ENCODE measurements at regions of chr7 and their contacts with region 1.

Region 1: DNA sequence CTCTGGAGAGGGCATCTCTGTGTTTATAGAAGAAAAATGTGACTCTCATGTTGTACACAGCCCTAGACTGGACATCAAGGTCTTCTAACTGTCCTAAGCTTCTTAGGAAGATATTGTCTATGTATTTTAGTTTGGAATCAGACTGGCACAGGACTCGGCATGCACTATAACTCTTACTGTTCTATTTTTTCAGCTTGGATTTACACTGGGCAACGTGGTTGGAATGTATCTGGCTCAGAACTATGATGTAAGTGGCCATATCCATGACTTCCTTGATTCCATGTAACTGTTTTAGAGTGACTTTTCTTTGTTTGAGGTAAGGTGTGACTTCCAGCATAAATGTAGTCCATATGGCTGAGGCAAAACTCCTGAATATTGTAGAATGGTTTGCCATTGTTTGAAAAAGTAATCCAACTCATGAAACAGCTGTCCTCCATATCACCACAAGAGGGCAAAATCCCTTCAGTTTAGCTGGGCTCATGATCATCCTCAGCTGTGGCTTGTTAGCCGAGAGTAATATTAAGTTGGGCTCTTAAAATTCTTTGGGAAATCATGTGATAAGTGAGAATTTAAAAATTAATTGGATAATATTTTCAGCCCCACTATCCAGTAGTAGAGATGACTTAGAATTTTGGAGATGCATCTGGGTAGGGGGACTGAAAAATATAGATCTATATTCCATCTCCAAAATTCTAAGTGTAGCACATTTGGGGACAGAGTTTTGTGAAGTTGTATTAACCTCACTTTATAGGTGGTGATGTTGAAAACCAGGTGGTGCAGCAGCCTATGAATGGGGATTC is 10.4 kb downstream of the STMP1 start:
- DNase-seq: peak in 1 of 2 donors; percentile 53
- ATAC-seq: peak; percentile 59 to 88 (median 82)
- H3K4me3 ChIP-seq: no peak overlapping the region
- H3K27ac ChIP-seq: peak overlapping the region in 6 of 10 donors; percentile 31 to 63 (median 38)
- H3K4me1 ChIP-seq: peaks cover 2 to 64% (median 44%) of the 10 kb centered on the region in 9 donors
- H3K27me3 ChIP-seq: no peaks in the 10 kb centered on the region
- CTCF ChIP-seq: peak; percentile 62 to 86 (median 78)

Region 2: DNA sequence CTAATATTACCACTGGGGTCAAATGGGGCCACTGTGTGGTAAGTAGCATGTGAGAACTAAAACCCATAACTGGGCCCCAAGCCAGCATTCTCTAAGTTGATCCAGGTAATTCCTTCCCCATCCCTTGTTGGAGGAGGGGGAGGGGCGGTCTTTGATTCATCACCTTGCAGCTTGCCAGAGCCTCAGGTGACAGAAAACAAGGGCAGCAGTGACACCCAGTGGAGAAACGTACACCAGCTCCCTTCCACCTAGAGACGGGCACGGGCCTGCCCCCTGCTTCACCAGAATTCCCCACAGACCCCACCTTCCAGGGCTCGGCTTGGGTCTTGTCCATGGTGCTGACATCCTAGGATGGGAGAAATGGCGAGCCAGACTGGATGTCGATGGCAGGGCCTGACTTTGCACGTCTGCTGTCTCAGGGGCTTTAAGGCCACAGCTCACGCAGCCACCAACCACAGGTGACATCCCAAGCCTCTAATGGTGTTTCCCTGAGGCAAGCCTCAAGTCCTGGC is 337.1 kb before region 1 on chr7:
- intact Hi-C with region 1: no loop called
- DNase-seq: peak in 1 of 2 donors; percentile 32
- ATAC-seq: peak in 7 of 8 donors; percentile 42 to 85 (median 67)
- H3K4me3 ChIP-seq: no peak overlapping the region
- H3K27ac ChIP-seq: no peak overlapping the region
- H3K4me1 ChIP-seq: no peaks in the 10 kb centered on the region
- H3K27me3 ChIP-seq: no peaks in the 10 kb centered on the region
- CTCF ChIP-seq: peak in 8 of 9 donors; percentile 10 to 51 (median 42)

Region 3: GRCh38 chr7:135745703-135746312 is 73.0 kb after region 1 on chr7:
- intact Hi-C with region 1: loop called in 2 of 10 experiments (anchors 5 to 10 kb)
- DNase-seq: peak in 1 of 2 donors; percentile 76
- ATAC-seq: peak in 7 of 8 donors; percentile 33 to 77 (median 57)
- H3K4me3 ChIP-seq: peak overlapping the region in 3 of 10 donors; percentile 2 to 52 (median 43)
- H3K27ac ChIP-seq: peak overlapping the region in 6 of 10 donors; percentile 62 to 91 (median 76)
- H3K4me1 ChIP-seq: peaks cover 7 to 62% (median 20%) of the 10 kb centered on the region in 9 donors
- H3K27me3 ChIP-seq: no peaks in the 10 kb centered on the region
- CTCF ChIP-seq: no peak

Region 4: DNA sequence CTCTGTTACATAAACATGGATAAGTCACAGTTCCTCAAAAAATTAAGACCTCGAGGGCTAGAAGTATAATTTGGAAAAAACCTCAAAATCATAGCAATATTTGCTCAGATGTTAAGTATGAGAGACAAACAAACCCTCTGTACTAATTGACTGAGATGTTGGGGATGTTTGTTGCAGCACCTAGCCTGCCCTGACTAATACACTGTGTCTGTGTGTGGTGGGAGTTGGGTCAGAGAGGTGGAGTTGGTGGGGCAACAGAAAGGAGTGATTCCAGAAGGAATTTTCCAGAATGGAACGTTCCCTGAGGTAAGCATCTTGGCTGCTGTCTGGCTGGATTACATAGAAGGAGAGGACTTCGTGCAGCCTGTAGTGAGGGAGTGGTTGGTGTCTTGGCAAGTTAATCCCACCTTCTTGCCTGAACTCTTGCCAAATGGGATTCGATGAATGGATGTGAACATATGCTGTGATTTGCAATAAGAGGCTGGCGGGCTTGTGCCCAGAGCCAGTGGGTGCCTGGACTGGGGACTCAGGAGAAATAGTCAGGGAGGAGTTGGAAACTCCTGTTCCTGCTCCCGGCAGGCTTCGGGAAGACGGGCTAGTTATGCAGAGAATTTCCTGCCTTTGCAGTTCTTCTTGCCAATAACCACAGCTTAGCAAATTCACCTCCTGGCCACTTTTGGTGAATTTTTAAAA is 85.1 kb after region 1 on chr7:
- intact Hi-C with region 1: loop called in 4 of 10 experiments (anchors 5 to 10 kb)
- DNase-seq: peak in 1 of 2 donors; percentile 45
- ATAC-seq: peak in 7 of 8 donors; percentile 31 to 74 (median 61)
- H3K4me3 ChIP-seq: peak overlapping the region in 7 of 10 donors; percentile 11 to 44 (median 36)
- H3K27ac ChIP-seq: peak overlapping the region; percentile 3 to 90 (median 75)
- H3K4me1 ChIP-seq: peaks cover 0 to 53% (median 9%) of the 10 kb centered on the region in 9 donors
- H3K27me3 ChIP-seq: no peaks in the 10 kb centered on the region
- CTCF ChIP-seq: no peak

Region 5: DNA sequence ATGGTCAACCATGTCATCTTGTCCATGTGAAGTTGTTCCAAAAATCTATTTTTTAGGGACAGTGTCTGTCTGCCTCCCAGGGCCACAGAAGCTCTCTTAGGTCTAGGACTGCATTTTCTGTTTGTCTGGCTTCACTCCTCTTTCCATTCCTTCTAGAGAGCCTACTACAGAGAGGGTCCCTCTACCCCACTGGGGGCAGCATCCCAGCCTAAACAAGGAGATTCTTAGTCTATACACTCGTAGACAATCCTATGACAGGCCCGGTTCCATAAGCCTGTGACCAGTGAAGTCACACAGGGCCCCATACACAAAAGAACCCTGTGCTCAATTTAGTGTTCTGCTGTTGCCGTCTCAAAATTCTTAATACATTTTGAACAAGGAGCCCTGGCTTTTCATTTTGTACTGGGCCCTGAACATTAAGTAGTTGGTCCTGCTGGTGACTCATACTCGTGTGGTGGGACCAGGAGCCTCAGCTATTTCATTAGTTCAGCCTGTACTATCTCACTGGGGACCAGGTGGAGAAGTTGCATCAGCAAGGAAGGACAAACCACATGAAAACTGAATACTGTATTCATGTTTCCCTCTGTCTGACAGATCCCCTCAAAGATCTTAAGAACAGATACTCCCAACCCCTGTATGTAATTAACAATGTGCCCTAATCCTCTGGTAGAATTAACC is 99.3 kb after region 1 on chr7:
- intact Hi-C with region 1: loop called in 1 of 10 experiments (anchors 5 kb)
- DNase-seq: no peak
- ATAC-seq: peak in 1 of 8 donors; percentile 38
- H3K4me3 ChIP-seq: no peak overlapping the region
- H3K27ac ChIP-seq: peak overlapping the region in 5 of 10 donors; percentile 30 to 91 (median 83)
- H3K4me1 ChIP-seq: peaks cover 5 to 67% (median 27%) of the 10 kb centered on the region in 9 donors
- H3K27me3 ChIP-seq: no peaks in the 10 kb centered on the region
- CTCF ChIP-seq: no peak

Region 6: DNA sequence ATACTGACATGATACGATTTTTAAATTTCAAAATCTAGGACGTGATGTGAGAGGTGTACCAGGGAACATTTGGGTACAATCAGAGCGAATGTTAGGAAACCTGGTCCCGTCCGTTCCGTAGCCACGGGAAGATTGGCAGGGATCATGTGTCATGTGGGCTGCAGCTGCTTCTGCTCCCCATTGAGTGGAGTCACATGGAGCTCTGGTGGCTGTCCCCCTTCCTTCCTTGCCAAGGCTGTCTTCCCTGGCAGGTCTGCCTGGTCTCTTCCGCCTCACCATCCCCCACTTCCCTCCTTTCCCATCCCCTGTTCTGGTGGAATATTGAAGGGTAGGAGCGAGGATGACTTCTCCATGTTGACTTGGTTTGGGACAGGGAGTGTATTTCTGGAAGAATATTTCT is 109.6 kb after region 1 on chr7:
- intact Hi-C with region 1: loop called in 1 of 10 experiments (anchors 10 kb)
- DNase-seq: no peak
- ATAC-seq: peak in 4 of 8 donors; percentile 39 to 79 (median 54)
- H3K4me3 ChIP-seq: no peak overlapping the region
- H3K27ac ChIP-seq: no peak overlapping the region
- H3K4me1 ChIP-seq: peaks cover 0 to 7% (median 0%) of the 10 kb centered on the region in 9 donors
- H3K27me3 ChIP-seq: no peaks in the 10 kb centered on the region
- CTCF ChIP-seq: no peak

Region 7: DNA sequence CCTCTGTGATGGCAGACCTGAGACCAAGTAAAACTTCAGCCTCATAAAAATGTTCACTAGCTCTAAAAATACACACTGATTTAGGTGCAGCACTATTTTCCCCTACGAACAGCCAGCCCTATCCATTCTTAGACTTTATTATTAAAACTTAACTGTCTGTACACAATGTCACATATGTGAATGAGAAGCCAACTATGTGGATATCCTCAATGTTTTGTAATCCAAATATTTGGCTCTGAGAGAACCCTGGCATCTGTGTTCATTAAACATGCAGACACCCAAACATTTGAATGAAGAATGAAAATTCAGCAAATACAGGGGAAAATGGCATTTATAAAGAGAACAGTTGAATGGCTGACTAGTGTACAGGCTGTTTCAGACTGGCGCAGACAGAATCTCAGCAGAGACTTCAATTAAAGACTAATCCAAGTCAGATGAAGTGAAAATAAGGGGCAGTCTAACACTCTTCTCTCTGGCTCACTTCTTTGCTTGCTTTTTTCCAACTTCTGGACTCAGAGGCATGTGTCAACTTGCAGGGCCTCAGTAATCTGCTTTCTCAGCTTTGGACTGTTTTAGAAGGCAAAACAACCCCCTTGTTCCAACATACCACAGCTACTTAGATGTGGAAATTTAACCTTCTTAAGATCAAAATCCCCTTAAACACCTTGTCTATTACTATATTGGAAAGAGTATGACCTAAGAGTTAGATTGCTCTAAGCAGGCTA is 123.2 kb after region 1 on chr7:
- intact Hi-C with region 1: loop called in 8 of 10 experiments (anchors 2 to 10 kb)
- DNase-seq: no peak
- ATAC-seq: peak in 1 of 8 donors; percentile 34
- H3K4me3 ChIP-seq: no peak overlapping the region
- H3K27ac ChIP-seq: peak overlapping the region in 4 of 10 donors; percentile 34 to 57 (median 45)
- H3K4me1 ChIP-seq: peaks cover 0 to 35% (median 13%) of the 10 kb centered on the region in 9 donors
- H3K27me3 ChIP-seq: no peaks in the 10 kb centered on the region
- CTCF ChIP-seq: no peak

Region 8: DNA sequence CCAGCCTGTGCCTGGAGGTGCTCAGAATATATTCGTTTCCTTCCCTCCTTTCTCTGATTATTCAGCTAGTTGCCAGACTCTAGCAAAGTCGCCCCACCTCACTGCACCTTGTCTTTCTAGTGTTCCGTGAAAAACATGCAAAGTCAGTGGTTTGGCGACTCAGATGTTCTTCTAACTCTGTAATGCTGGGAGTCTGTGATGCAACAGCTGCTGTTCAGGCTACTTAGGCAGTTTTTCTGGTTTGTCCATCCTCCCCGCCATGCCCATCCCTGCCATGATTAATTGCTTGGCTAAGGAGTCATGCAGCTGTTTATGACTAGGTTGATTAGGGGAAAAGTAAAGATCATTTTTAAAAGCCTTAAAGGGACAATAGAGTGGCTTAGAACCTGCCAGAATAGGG is 205.0 kb after region 1 on chr7:
- intact Hi-C with region 1: no loop called
- DNase-seq: no peak
- ATAC-seq: no peak
- H3K4me3 ChIP-seq: no peak overlapping the region
- H3K27ac ChIP-seq: no peak overlapping the region
- H3K4me1 ChIP-seq: peaks cover 0 to 7% (median 0%) of the 10 kb centered on the region in 9 donors
- H3K27me3 ChIP-seq: no peaks in the 10 kb centered on the region
- CTCF ChIP-seq: no peak

Region 9: DNA sequence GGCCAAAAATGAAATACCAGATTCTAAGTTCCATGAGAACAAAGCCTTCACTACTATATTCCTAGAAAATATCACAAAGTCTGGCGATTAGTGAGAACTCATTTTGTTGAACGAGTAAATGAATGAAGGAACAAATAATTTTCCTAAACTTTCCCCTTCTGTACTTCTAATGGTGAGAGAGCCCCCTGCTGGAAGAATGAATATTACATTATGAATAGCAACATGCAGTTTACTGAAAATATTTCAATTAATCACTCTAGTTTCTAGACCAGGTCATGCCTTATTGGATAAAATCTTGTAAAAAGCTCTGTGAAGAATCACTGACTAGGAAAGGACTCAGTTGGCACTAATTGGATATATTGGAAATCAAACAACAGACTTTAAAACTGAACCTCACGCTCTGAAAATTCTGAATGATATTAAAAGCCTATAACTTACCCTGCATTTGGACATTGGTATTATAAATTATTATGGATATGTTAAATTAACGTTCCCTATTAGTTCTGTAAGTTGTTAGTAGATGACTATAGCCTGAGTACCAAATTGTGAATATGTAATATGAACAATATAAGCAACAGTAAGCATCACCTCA is 336.8 kb after region 1 on chr7:
- intact Hi-C with region 1: loop called in 9 of 10 experiments (anchors 5 to 10 kb)
- DNase-seq: no peak
- ATAC-seq: no peak
- H3K4me3 ChIP-seq: no peak overlapping the region
- H3K27ac ChIP-seq: no peak overlapping the region
- H3K4me1 ChIP-seq: peaks cover 0 to 2% (median 0%) of the 10 kb centered on the region in 9 donors
- H3K27me3 ChIP-seq: no peaks in the 10 kb centered on the region
- CTCF ChIP-seq: peak; percentile 58 to 88 (median 77)